SK-N-SH (cell line): ENCODE measurements at regions of chr12 and their contacts with region 1.

Region 1: DNA sequence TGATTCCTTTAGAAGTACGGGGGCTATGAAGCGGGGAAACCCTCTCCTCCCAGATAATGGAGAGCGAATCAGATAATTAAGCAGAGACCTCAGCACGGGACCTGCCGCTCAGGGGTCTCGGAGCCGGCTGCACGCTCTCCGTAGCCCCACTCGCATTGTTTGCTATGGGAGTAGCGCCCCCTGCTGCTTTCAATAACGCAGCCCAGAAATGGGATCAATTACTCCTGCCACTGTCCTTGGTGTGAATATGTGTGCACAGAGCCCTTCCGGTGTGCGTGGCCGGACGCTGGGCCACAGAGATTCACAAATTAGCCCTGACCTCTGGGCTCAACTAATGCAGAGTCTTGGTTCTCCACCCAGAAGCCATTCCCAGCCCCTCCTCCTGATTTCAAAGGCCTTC is 76.4 kb upstream of the TMEM132C start:
- DNase-seq: peak; percentile 69
- H3K4me3 ChIP-seq: no peak overlapping the region; a peak in 1 of 4 replicates
- H3K27ac ChIP-seq: no peak overlapping the region
- H3K4me1 ChIP-seq: no peaks in the 10 kb centered on the region; a peak in 1 of 4 replicates
- H3K27me3 ChIP-seq: no peaks in the 10 kb centered on the region
- CTCF ChIP-seq: no peak
- EP300 ChIP-seq: no peak
- RAD21 ChIP-seq: peak; percentile 63

Region 2: GRCh38 chr12:128204711-128205110 is 14.1 kb after region 1 on chr12:
- CTCF ChIA-PET with region 1: interaction called, 11 read pairs
- POLR2A ChIA-PET with region 1: no interaction called
- DNase-seq: no peak
- H3K4me3 ChIP-seq: no peak overlapping the region
- H3K27ac ChIP-seq: no peak overlapping the region
- H3K4me1 ChIP-seq: no peaks in the 10 kb centered on the region
- H3K27me3 ChIP-seq: no peaks in the 10 kb centered on the region
- CTCF ChIP-seq: no peak
- EP300 ChIP-seq: no peak
- RAD21 ChIP-seq: no peak

Region 3: GRCh38 chr12:128286970-128287369 is 96.4 kb after region 1 on chr12:
- CTCF ChIA-PET with region 1: no interaction called
- POLR2A ChIA-PET with region 1: no interaction called
- DNase-seq: no peak
- H3K4me3 ChIP-seq: no peak overlapping the region
- H3K27ac ChIP-seq: no peak overlapping the region
- H3K4me1 ChIP-seq: no peaks in the 10 kb centered on the region
- H3K27me3 ChIP-seq: no peaks in the 10 kb centered on the region
- CTCF ChIP-seq: no peak
- EP300 ChIP-seq: no peak
- RAD21 ChIP-seq: no peak

Region 4: GRCh38 chr12:128418944-128419343 is 228.3 kb after region 1 on chr12:
- CTCF ChIA-PET with region 1: no interaction called
- POLR2A ChIA-PET with region 1: no interaction called
- DNase-seq: no peak
- H3K4me3 ChIP-seq: no peak overlapping the region
- H3K27ac ChIP-seq: no peak overlapping the region
- H3K4me1 ChIP-seq: no peaks in the 10 kb centered on the region
- H3K27me3 ChIP-seq: no peaks in the 10 kb centered on the region
- CTCF ChIP-seq: no peak
- EP300 ChIP-seq: no peak
- RAD21 ChIP-seq: no peak